Right ventricle myocardium superior (tissue), 1 donor: ENCODE measurements at regions of chr19 and their contacts with region 1.

Region 1: GRCh38 chr19:43519436-43520088 is 7.4 kb downstream of the ETHE1 start:
- DNase-seq: peak; percentile 82
- ATAC-seq: peak; percentile 74

Region 2: DNA sequence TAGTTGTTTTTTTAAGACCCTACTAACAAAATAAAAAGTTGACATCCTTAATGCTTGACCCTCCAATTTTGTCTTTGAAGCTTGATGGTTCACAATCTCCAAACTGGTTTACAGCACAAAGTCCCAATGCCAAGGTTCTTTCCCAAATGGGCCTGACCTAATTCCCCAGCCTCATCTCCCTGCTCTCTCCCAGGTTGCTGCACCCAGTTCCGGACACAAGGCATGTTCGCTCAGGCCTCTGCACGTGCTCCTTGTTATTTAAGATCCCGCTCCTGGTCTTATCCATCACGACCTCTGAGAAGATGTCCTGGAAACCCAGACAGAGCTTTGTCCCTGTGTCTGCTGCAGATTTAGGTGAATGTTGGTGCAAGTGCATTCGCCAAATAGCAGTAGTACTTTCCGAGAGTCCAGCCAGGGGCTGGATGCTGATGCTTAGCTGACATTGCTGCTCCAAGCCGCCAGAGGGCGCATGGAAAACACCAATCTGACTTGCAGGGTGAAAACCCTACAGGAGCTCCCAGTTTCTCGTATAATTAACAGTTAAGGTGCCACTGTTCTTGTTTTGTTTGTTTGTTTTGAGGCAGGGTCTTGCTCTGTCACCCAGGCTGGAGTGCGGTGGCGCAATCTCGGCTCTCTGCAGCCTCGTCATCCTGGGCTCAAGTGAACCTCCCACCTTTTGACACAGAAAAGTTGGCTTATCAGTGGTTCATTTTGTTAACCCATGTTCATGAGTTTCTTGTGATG is 72.6 kb before region 1 on chr19:
- intact Hi-C with region 1: loop called (anchors 2 kb)
- DNase-seq: peak; percentile 85
- ATAC-seq: peak; percentile 93

Region 3: DNA sequence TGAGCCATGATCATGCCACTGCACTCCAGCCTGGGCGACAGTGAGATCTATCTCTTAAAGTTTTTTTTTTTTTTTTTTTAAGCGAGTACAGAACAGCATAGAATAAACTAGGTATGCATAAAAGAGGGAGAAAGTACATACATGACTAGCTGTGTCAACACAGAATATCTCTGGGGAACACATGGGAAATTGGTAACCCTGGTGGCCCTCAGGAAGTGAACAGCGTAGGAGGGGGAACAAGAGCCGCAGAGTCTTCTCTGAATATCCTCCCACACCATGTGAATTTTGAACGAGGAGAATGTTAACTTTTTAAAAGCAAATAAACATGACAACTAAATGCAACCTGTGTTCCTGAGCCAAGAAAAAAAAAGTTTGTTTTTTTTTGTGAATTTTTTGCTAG is 30.3 kb before region 1 on chr19:
- intact Hi-C with region 1: no loop called
- DNase-seq: no peak
- ATAC-seq: no peak